Activated CD4-positive, alpha-beta T cell treated with anti-CD3 and anti-CD28 coated beads for 36 hours (primary cell): ENCODE measurements at regions of chr4 and their contacts with region 1.

Region 1: DNA sequence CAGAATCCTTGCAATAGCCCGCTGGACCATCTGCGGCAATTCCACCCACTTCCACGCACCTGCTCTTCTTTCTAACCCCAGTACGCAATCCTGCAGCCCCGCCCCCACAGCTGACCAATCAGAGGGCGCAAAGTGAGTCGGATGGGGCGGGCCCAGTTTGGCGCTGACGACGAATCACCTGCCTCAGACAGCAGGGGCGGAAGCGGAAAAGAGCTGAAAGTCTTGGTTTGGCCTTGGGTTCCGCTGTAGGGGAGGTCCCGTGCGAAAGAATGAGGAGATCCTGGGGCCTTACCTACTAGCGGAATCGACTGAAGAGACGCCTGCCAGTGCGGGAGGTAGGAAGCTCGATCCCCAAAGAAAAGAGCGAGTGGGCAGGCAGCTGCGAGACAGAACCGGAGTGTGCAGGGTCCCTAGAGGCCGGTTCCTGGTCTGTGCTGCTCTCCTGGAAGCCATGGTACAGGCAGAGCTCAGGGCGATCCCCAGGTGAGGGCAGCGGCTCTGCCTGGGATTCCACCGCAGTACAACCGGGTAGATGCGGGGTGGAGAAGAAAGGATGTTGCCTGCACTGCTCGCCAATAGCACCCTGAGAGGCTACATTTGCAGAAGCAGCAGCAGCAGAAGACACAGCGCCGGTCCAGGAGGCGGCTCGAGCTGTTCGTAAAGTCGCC is at the start of gene TMEM184C:
- DNase-seq: peak; percentile 99
- ATAC-seq: peak; percentile 98
- H3K4me3 Mint-ChIP-seq: peak within 1 kb of the TSS; percentile 93
- H3K27ac Mint-ChIP-seq: peak within 1 kb of the TSS; percentile 94
- H3K4me1 Mint-ChIP-seq: peaks cover 26% of the 10 kb centered on the region
- H3K27me3 Mint-ChIP-seq: peaks cover 3% of the 10 kb centered on the region
- total RNA-seq, gene TMEM184C: 11.7 to 15.3 TPM

Region 2: DNA sequence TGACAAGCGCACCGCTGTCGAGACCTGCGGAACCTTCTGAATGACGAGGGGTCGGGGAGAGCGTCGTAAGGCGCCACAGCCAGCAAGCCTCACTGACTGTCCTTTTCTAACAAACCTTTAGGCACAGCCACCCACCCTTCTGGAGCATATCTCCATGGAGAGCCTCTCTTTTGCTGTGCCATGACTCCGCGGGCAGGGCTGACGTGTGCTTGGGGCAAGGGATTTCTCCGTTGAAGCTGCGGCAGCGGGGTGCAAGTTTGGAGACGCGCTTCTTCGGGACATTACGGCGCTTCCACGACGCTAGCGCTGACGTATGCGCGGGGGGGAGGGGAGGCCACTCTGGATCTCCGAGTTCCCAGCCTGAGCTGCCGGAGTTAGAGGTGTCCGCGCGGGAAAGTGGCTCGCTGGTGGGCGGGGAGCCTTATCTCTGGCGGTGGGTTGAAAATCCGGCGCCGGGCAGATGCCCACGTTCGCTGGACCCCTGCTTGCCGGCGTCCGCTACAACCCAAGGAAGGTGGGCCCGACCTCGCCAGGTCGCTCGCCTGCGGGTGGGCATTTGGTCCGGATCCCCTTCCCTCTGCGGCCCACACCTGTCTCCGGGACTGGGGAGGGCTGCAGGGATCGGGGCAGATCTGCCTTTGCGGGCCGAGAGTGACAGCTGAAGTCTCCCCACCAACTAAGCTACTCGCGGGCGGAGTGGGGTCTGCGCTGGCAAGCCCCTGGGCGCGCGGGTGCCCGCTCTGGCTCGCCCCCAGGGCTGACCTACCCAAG is 1095.0 kb before region 1 on chr4:
- CTCF ChIA-PET with region 1: no interaction called
- POLR2A ChIA-PET with region 1: no interaction called
- intact Hi-C with region 1: loop called in 1 of 2 experiments (anchors 5 kb)
- DNase-seq: peak; percentile 91
- ATAC-seq: peak; percentile 77
- H3K4me3 Mint-ChIP-seq: no peak overlapping the region
- H3K27ac Mint-ChIP-seq: no peak overlapping the region
- H3K4me1 Mint-ChIP-seq: peaks cover 27% of the 10 kb centered on the region
- H3K27me3 Mint-ChIP-seq: no peaks in the 10 kb centered on the region

Region 3: GRCh38 chr4:147640331-147640730 is 23.0 kb after region 1 on chr4:
- CTCF ChIA-PET with region 1: interaction called, 4 read pairs
- POLR2A ChIA-PET with region 1: interaction called, 10 read pairs
- intact Hi-C with region 1: no loop called
- DNase-seq: no peak
- ATAC-seq: no peak
- H3K4me3 Mint-ChIP-seq: no peak overlapping the region
- H3K27ac Mint-ChIP-seq: no peak overlapping the region
- H3K4me1 Mint-ChIP-seq: peaks cover 17% of the 10 kb centered on the region
- H3K27me3 Mint-ChIP-seq: no peaks in the 10 kb centered on the region

Region 4: DNA sequence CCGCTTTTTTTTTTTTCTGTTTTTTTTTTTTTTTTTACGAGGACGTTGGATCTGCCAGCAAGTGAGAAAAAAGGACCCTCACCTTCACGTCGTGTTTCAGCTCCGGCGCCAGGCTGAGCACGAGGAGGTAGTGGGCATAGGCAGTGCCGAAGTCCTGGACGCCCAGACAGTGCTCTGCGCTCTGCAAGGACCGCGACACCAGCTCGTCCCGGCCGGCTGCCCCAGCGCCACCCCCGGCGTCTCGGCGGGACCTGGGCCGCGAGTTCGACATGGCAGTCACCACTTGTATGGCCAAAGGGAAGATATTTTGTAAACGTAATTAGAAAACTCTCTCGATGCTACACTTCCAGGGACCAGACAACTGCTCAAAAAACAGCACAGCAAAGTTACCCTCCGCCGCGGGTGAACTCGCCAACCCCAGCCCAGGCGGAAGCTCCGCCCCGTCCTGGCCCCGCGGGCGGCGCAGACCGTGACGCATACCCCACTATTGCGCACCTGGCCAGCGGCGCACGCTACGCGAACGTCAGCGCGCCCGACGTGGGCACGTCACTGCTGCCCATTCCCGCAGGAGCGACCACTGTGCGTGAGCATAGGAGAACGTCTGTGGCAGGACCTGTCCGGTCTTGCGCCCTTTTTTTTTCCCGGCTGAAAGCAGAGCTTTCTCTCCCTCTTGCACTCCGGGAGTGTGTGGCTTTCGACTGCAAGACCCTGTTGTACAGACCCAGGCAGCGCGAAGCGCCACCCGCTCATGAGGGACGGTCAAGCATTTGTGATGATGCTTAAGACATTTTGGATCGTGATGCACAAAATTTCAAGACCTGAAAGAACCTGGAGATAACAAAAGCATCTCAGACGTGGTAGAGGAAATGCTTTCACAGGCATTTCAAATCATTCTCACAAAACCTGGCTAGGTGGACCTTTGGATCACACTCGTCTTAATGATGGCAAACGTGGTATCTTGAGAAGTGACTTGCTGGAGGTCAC is 66.7 kb after region 1 on chr4 and contains the start of gene PRMT9:
- CTCF ChIA-PET with region 1: interaction called, 9 read pairs
- POLR2A ChIA-PET with region 1: interaction called, 21 read pairs
- intact Hi-C with region 1: loop called (anchors 1 kb)
- DNase-seq: peak; percentile 93
- ATAC-seq: peak; percentile 99
- H3K4me3 Mint-ChIP-seq: peak within 1 kb of the TSS; percentile 92
- H3K27ac Mint-ChIP-seq: peak within 1 kb of the TSS; percentile 91
- H3K4me1 Mint-ChIP-seq: peaks cover 25% of the 10 kb centered on the region
- H3K27me3 Mint-ChIP-seq: peaks cover 6% of the 10 kb centered on the region
- total RNA-seq, gene PRMT9: 6.2 to 7.5 TPM

Region 5: GRCh38 chr4:147731580-147732517 is 114.5 kb after region 1 on chr4 and contains the start of gene ARHGAP10:
- CTCF ChIA-PET with region 1: no interaction called
- POLR2A ChIA-PET with region 1: interaction called, 5 read pairs
- intact Hi-C with region 1: loop called in 1 of 2 experiments (anchors 2 kb)
- DNase-seq: peak; percentile 83
- ATAC-seq: peak; percentile 82
- H3K4me3 Mint-ChIP-seq: peak within 1 kb of the TSS; percentile 85
- H3K27ac Mint-ChIP-seq: peak within 1 kb of the TSS; percentile 87
- H3K4me1 Mint-ChIP-seq: peaks cover 45% of the 10 kb centered on the region
- H3K27me3 Mint-ChIP-seq: peaks cover 3% of the 10 kb centered on the region
- total RNA-seq, gene ARHGAP10: 6.1 to 6.2 TPM